ENCODE measurements at regions of chr11 and their contacts with region 1.

Region 1: GRCh38 chr11:13955971-13956421 is 6.5 kb upstream of the SPON1 start:
- DNase-seq: peak; percentile 84
- H3K4me3 Mint-ChIP-seq: no peak overlapping the region
- H3K27ac Mint-ChIP-seq: no peak overlapping the region
- H3K4me1 Mint-ChIP-seq: no peaks in the 10 kb centered on the region
- H3K27me3 Mint-ChIP-seq: peaks cover 38% of the 10 kb centered on the region

Region 2: GRCh38 chr11:14079011-14079410 is 123.0 kb after region 1 on chr11:
- intact Hi-C with region 1: no loop called
- DNase-seq: no peak
- H3K4me3 Mint-ChIP-seq: peak overlapping the region; percentile 28
- H3K27ac Mint-ChIP-seq: no peak overlapping the region
- H3K4me1 Mint-ChIP-seq: peaks cover 39% of the 10 kb centered on the region
- H3K27me3 Mint-ChIP-seq: peaks cover 18% of the 10 kb centered on the region

Region 3: GRCh38 chr11:14148653-14149273 is 192.8 kb after region 1 on chr11:
- intact Hi-C with region 1: loop called (anchors 1 kb)
- DNase-seq: peak; percentile 63
- H3K4me3 Mint-ChIP-seq: no peak overlapping the region
- H3K27ac Mint-ChIP-seq: no peak overlapping the region
- H3K4me1 Mint-ChIP-seq: no peaks in the 10 kb centered on the region
- H3K27me3 Mint-ChIP-seq: peaks cover 13% of the 10 kb centered on the region